ENCODE measurements at regions of chrX and their contacts with region 1.

Region 1: GRCh38 chrX:39427906-39428305 is 626.6 kb downstream of the MID1IP1 start:
- DNase-seq: peak; percentile 71
- ATAC-seq: peak; percentile 66
- H3K4me3 Mint-ChIP-seq: no peak overlapping the region
- H3K27ac Mint-ChIP-seq: peak overlapping the region; percentile 92
- H3K4me1 Mint-ChIP-seq: peaks cover 68% of the 10 kb centered on the region
- H3K27me3 Mint-ChIP-seq: no peaks in the 10 kb centered on the region
- CTCF ChIP-seq: no peak

Region 2: DNA sequence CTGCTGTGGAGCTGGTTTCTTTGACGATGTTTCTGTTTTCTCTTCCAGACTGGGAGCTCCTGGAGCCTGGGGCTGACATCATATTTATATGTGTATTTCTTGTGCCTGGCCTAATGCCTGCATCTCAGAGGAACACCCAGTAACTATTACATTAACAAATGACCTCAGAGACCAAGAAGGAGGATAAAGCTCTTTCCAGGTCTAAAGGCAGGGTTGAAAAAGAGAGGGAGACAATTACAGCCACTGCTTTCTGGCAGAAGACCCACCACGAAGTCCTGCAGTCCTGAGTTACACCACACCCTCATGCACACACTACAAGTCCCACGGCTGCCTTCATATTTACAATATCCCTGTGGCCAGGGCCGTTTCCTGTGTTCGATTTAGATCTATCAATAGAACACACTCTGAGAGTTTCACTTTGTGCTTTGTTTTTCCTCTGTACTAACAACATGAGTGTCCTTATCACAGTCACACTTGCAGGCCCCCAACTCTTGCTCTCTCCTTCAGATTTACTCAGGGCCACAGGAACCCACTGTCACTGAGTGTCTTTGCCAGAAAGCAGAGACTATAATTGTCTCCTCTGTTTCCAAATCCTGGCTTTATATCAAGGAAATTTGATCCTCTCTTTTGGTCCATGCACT is 91.1 kb before region 1 on chrX:
- CTCF ChIA-PET with region 1: no interaction called
- POLR2A ChIA-PET with region 1: no interaction called
- intact Hi-C with region 1: loop called (anchors 10 kb)
- DNase-seq: peak; percentile 67
- ATAC-seq: peak; percentile 86
- H3K4me3 Mint-ChIP-seq: peak overlapping the region; percentile 5
- H3K27ac Mint-ChIP-seq: peak overlapping the region; percentile 81
- H3K4me1 Mint-ChIP-seq: peaks cover 42% of the 10 kb centered on the region
- H3K27me3 Mint-ChIP-seq: no peaks in the 10 kb centered on the region
- CTCF ChIP-seq: no peak

Region 3: GRCh38 chrX:39453889-39454621 is 26.1 kb after region 1 on chrX:
- CTCF ChIA-PET with region 1: no interaction called
- POLR2A ChIA-PET with region 1: no interaction called
- intact Hi-C with region 1: no loop called
- DNase-seq: no peak
- ATAC-seq: no peak
- H3K4me3 Mint-ChIP-seq: no peak overlapping the region
- H3K27ac Mint-ChIP-seq: no peak overlapping the region
- H3K4me1 Mint-ChIP-seq: peaks cover 16% of the 10 kb centered on the region
- H3K27me3 Mint-ChIP-seq: no peaks in the 10 kb centered on the region
- CTCF ChIP-seq: no peak